H1 (cell line): ENCODE measurements at regions of chr6 and their contacts with region 1.

Region 1: GRCh38 chr6:3294921-3295871 is 36.4 kb downstream of the PSMG4 start:
- DNase-seq: no peak
- H3K4me3 ChIP-seq: no peak overlapping the region
- H3K27ac ChIP-seq: no peak overlapping the region
- H3K4me1 ChIP-seq: no peaks in the 10 kb centered on the region
- H3K27me3 ChIP-seq: no peaks in the 10 kb centered on the region
- CTCF ChIP-seq: peak; percentile 43 to 64 (median 60); a peak in 3 of 4 replicates
- EP300 ChIP-seq: no peak
- POLR2A ChIP-seq: no peak
- RAD21 ChIP-seq: peak; percentile 66 to 74

Region 2: DNA sequence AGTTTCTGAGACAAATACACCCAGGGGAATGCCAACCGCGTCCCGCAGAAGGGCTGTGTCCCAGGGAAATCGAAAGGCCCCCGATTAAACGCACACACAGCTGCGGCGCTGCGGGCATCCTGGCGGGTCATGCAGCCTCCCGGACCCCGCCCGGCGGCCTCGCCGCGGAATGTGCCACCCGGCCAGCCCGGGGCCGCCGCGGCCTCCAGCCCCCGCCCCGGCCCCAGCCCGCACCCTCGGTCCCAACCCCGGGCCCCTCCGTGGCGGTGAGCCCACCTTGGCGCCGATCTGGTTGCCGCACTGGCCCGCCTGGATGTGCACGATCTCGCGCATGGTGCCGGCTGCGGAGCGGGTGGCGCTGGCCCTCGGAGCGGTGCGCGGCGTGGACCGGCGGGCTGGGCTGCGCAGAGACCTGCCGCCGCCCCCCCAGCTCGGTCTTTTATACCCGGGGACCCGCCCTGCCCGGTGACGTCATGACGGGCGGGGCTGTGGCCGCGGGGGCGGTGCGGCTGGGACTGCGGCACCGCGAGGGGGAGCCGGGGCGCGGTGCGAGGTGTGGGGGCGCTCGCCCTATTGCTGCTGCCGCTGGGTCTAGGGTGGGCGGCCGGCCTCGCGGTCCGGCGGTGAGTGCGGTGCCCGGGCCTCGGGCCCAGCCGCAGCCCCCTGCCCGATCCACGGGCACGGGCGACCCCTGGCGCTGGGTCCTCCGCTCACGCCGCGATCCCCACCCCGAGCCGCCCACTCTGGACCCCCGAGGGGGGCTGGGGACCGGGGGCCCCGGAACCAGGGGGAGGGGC is 137.9 kb before region 1 on chr6 and contains the start of gene TUBB2A:
- CTCF ChIA-PET with region 1: no interaction called
- POLR2A ChIA-PET with region 1: no interaction called
- DNase-seq: peak in 1 of 2 experiments; percentile 90
- H3K4me3 ChIP-seq: peak within 1 kb of the TSS; percentile 60 to 79 (median 74)
- H3K27ac ChIP-seq: peak within 1 kb of the TSS; percentile 24; the same call in 1 of the 2 replicates
- H3K4me1 ChIP-seq: peaks cover 0 to 20% (median 9%) of the 10 kb centered on the region in 4 experiments; a peak in 5 of 7 replicates
- H3K27me3 ChIP-seq: no peaks in the 10 kb centered on the region
- CTCF ChIP-seq: peak; percentile 30 to 61 (median 45)
- EP300 ChIP-seq: peak in 1 of 2 experiments; percentile 43; a peak in 1 of 3 replicates
- POLR2A ChIP-seq: peak; percentile 67 to 78
- RAD21 ChIP-seq: peak; percentile 1 to 34; a peak in 1 of 4 replicates
- total RNA-seq, gene TUBB2A: 330 and 349 TPM in 2 replicates

Region 3: GRCh38 chr6:3281631-3282475 is 13.3 kb before region 1 on chr6:
- CTCF ChIA-PET with region 1: interaction called, 35 read pairs
- POLR2A ChIA-PET with region 1: interaction called, 3 read pairs
- DNase-seq: peak in 1 of 2 experiments; percentile 21
- H3K4me3 ChIP-seq: peak overlapping the region in 1 of 4 experiments; percentile 12; a peak in 3 of 8 replicates
- H3K27ac ChIP-seq: no peak overlapping the region
- H3K4me1 ChIP-seq: peaks cover 11 to 15% (median 15%) of the 10 kb centered on the region in 4 experiments
- H3K27me3 ChIP-seq: no peaks in the 10 kb centered on the region
- CTCF ChIP-seq: no peak
- EP300 ChIP-seq: no peak
- POLR2A ChIP-seq: no peak
- RAD21 ChIP-seq: no peak

Region 4: GRCh38 chr6:3654436-3655297 is 359.5 kb after region 1 on chr6:
- CTCF ChIA-PET with region 1: no interaction called
- POLR2A ChIA-PET with region 1: no interaction called
- DNase-seq: no peak
- H3K4me3 ChIP-seq: no peak overlapping the region
- H3K27ac ChIP-seq: no peak overlapping the region
- H3K4me1 ChIP-seq: no peaks in the 10 kb centered on the region
- H3K27me3 ChIP-seq: no peaks in the 10 kb centered on the region; a peak in 1 of 7 replicates
- CTCF ChIP-seq: no peak
- EP300 ChIP-seq: no peak
- POLR2A ChIP-seq: no peak
- RAD21 ChIP-seq: no peak